ENCODE measurements at regions of chr2 and their contacts with region 1.

Region 1: DNA sequence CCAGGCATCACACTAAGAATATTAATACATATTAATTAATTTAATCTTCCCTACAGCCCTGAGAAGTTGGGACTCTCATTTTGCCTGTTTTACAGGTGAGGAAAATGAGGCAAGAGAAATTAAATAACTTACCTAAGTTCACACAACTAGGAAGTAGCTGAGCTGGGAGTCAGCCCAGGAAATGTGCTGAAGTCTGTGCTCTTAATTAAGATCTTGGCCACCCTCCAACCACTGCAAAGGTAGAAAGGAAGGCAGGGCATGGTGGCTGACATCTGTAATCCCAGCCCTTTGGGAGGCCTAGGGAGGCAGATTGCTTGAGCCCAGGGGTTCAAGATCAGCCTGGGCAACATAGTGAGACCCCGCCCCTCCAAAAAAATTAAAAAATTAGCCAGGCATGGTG is 12.9 kb upstream of the MGAT4A start:
- DNase-seq: peak in 1 of 14 experiments; percentile 57
- ATAC-seq: peak; percentile 59
- H3K4me3 ChIP-seq: no peak overlapping the region
- H3K4me3 Mint-ChIP-seq: no peak overlapping the region
- H3K27ac ChIP-seq: no peak overlapping the region
- H3K27ac Mint-ChIP-seq: peak overlapping the region; percentile 49
- H3K4me1 ChIP-seq: peaks cover 44% of the 10 kb centered on the region
- H3K4me1 Mint-ChIP-seq: peaks cover 77% of the 10 kb centered on the region
- H3K27me3 ChIP-seq: no peaks in the 10 kb centered on the region
- H3K27me3 Mint-ChIP-seq: no peaks in the 10 kb centered on the region
- CTCF ChIP-seq: no peak

Region 2: GRCh38 chr2:98757904-98758421 is 14.1 kb after region 1 on chr2:
- CTCF ChIA-PET with region 1: interaction called, 7 read pairs
- POLR2A ChIA-PET with region 1: interaction called, 22 read pairs
- intact Hi-C with region 1: loop called in 1 of 2 experiments (anchors 2 kb)
- DNase-seq: peak in 13 of 14 experiments; percentile 41 to 89 (median 58)
- ATAC-seq: peak; percentile 78
- H3K4me3 ChIP-seq: peak overlapping the region; percentile 33
- H3K4me3 Mint-ChIP-seq: peak overlapping the region; percentile 75
- H3K27ac ChIP-seq: peak overlapping the region; percentile 73 to 75
- H3K27ac Mint-ChIP-seq: peak overlapping the region; percentile 94
- H3K4me1 ChIP-seq: peaks cover 68% of the 10 kb centered on the region
- H3K4me1 Mint-ChIP-seq: peaks cover 95% of the 10 kb centered on the region
- H3K27me3 ChIP-seq: no peaks in the 10 kb centered on the region
- H3K27me3 Mint-ChIP-seq: no peaks in the 10 kb centered on the region
- CTCF ChIP-seq: no peak

Region 3: GRCh38 chr2:99754210-99754609 is 1010.4 kb after region 1 on chr2:
- CTCF ChIA-PET with region 1: no interaction called
- POLR2A ChIA-PET with region 1: no interaction called
- intact Hi-C with region 1: no loop called
- DNase-seq: no peak
- ATAC-seq: no peak
- H3K4me3 ChIP-seq: no peak overlapping the region
- H3K4me3 Mint-ChIP-seq: no peak overlapping the region
- H3K27ac ChIP-seq: no peak overlapping the region
- H3K27ac Mint-ChIP-seq: no peak overlapping the region
- H3K4me1 ChIP-seq: no peaks in the 10 kb centered on the region
- H3K4me1 Mint-ChIP-seq: no peaks in the 10 kb centered on the region
- H3K27me3 ChIP-seq: no peaks in the 10 kb centered on the region
- H3K27me3 Mint-ChIP-seq: no peaks in the 10 kb centered on the region
- CTCF ChIP-seq: no peak